ENCODE measurements at regions of chr7 and their contacts with region 1.

Region 1: DNA sequence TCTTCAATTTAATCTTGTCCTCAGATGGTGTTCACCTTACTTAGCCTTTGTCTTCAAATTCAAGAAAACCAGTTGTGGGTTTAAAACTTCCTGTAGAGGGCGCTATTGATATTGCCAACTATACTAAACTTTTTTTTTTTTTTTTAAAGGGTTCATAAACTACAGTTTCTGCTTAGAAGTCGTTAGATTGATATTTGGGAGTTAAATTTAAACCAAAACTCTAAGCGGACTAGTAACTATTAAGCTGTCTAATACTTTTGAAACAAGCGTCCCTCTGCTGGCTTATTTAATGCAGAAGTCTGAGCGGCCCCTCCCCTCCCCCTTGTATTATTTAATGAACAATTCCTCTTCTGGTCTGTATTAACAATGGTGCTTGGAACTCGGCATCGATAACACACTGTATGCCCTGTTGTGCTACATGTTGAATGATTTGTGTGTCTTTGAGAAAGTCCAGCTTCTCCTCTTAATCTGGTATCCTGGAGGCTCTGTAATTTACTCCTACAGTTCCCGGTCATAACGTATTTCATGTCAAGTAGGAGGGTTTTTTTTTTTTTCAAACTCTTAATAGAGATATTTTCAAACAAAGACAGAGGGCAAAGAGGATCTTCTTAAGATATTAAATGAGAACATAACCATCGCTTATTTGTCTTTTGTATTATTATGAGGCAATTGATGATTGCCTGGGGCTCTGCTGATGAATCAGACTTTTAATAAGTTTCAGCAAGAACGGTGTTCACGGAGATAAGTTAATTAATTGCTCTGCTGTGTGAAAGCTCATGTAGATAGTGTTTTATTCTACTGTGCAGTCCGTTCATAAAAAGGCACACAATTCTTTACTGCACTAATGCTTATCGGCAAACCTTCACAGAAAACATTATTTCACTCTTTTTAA is 22.6 kb upstream of the CREB5 start:
- DNase-seq: no peak
- H3K4me3 Mint-ChIP-seq: no peak overlapping the region
- H3K27ac Mint-ChIP-seq: no peak overlapping the region
- H3K4me1 Mint-ChIP-seq: peaks cover 1% of the 10 kb centered on the region
- H3K27me3 Mint-ChIP-seq: peaks cover 29% of the 10 kb centered on the region

Region 2: GRCh38 chr7:28228396-28228795 is 161.4 kb before region 1 on chr7:
- CTCF ChIA-PET with region 1: no interaction called
- POLR2A ChIA-PET with region 1: no interaction called
- intact Hi-C with region 1: no loop called
- DNase-seq: no peak
- H3K4me3 Mint-ChIP-seq: no peak overlapping the region
- H3K27ac Mint-ChIP-seq: no peak overlapping the region
- H3K4me1 Mint-ChIP-seq: no peaks in the 10 kb centered on the region
- H3K27me3 Mint-ChIP-seq: peaks cover 26% of the 10 kb centered on the region

Region 3: GRCh38 chr7:28626624-28627262 is 237.0 kb after region 1 on chr7:
- CTCF ChIA-PET with region 1: interaction called, 6 read pairs
- POLR2A ChIA-PET with region 1: no interaction called
- intact Hi-C with region 1: loop called (anchors 1 kb)
- DNase-seq: peak; percentile 18
- H3K4me3 Mint-ChIP-seq: no peak overlapping the region
- H3K27ac Mint-ChIP-seq: no peak overlapping the region
- H3K4me1 Mint-ChIP-seq: no peaks in the 10 kb centered on the region
- H3K27me3 Mint-ChIP-seq: peaks cover 5% of the 10 kb centered on the region

Region 4: DNA sequence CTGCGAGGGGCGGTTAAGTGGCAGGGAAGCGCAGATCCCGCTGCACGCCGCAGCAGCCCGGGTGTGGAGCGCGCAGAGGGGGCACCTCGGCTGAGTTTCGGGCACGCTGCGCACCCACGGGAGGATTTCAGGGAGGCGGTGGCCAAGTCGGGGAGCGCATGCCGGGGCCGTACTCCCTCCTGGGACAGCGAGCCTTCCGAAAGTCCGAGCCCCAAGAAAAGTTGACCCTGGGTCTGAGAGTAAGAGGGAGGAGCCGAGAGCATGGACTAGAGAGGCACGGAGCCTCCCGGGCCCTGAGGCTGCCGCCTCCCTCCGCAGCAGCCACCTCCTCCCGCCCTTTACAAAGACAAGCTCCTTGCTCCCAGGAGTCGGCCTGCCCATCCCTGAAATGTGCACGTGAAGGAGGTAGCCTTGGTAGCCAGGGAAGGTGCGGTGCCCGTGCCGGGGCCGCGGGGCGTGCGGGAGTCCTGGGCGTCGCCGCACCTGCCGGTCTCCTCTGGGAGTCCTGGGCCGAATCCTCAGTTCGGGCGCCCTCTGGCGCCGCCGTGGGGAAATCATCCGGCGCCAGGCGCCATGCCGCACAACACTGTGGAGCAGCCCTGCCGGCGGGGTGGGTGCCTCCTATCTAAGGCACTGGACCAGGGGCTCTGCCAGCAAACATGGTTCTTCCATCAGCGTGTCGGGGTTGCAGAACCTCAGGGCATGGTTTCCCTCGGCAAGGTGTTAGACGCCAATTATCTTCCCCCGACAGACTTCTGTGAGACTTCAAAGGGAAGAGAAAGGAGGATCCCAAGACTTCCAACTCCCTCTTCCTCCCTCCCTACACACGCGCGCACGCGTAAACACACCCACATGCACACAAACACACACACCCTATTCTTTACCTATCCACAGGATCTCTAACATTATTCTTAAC is 464.3 kb after region 1 on chr7:
- CTCF ChIA-PET with region 1: interaction called, 4 read pairs
- POLR2A ChIA-PET with region 1: no interaction called
- intact Hi-C with region 1: loop called (anchors 1 kb)
- DNase-seq: peak; percentile 77
- H3K4me3 Mint-ChIP-seq: peak overlapping the region; percentile 29
- H3K27ac Mint-ChIP-seq: no peak overlapping the region
- H3K4me1 Mint-ChIP-seq: peaks cover 7% of the 10 kb centered on the region
- H3K27me3 Mint-ChIP-seq: peaks cover 49% of the 10 kb centered on the region